AG04449 (cell line): ENCODE measurements at regions of chr15 and their contacts with region 1.

Region 1: GRCh38 chr15:33215941-33216872 is 21.7 kb upstream of the FMN1 start:
- DNase-seq: no peak
- H3K4me3 ChIP-seq: no peak overlapping the region
- CTCF ChIP-seq: peak; percentile 44

Region 2: DNA sequence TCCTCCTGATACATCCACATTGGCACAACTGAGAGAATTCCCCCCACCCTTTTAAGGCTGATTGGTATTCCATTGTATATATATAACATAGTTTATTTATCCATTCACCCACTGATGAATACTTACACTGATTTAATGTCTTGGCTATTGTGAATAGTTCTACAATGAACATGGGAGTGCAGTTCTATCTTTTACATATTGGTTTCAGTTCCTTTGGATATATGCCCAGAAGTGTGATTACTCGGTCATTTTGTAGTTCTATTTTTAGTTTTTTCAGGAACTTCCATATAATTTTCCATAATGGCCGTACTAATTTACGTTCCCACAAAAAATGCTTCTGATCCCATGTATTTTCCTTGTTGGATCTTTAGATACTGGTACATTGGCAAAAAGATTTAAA is 157.0 kb before region 1 on chr15:
- CTCF ChIA-PET with region 1: no interaction called
- POLR2A ChIA-PET with region 1: no interaction called
- DNase-seq: peak; percentile 19
- H3K4me3 ChIP-seq: no peak overlapping the region
- CTCF ChIP-seq: no peak

Region 3: GRCh38 chr15:33201491-33202231 is 14.5 kb before region 1 on chr15:
- CTCF ChIA-PET with region 1: interaction called, 14 read pairs
- POLR2A ChIA-PET with region 1: no interaction called
- DNase-seq: no peak
- H3K4me3 ChIP-seq: no peak overlapping the region
- CTCF ChIP-seq: no peak

Region 4: GRCh38 chr15:33344111-33344510 is 127.9 kb after region 1 on chr15:
- CTCF ChIA-PET with region 1: no interaction called
- POLR2A ChIA-PET with region 1: no interaction called
- DNase-seq: no peak
- H3K4me3 ChIP-seq: no peak overlapping the region
- CTCF ChIP-seq: no peak